ENCODE measurements at regions of chr13 and their contacts with region 1.

Region 1: DNA sequence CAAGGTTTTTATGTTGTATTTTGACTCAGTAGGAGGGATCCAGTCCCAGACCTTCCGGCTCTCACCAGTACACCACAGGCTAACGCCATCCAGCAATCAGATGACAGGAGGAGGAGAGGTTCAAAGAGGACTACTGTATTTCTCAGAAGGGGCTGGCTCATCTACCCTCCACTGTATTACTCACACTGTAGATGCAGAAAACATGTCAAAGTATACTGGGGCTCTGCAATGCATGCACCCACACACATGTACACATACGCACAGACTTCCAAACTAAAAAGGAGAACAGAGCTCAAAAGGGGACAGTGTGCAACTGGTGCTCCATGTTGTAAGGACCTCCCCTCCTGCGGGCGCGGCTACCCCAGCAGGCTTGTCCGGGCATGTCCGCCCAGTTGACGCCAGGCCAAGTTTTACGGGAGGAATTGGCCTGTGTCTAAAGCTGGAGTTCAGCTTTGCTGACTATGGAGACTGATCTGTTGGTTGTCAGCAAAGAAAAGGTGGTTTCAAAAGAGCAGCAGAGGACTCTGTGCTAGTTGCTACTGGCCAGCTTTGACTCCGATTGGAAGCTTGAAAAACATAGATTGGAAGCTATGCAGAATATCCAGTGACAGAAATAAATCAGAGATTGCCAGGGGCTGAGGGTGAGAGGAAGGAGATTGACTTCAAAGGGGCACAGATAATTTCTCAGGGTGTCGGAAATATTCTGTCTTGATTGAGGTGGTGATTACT is 314.2 kb downstream of the DLEU7 start:
- DNase-seq: no peak
- ATAC-seq: peak; percentile 88
- H3K4me3 ChIP-seq: peak overlapping the region in 1 of 2 experiments; percentile 36; a peak in 3 of 4 replicates
- H3K27ac ChIP-seq: peak overlapping the region; percentile 85
- H3K4me1 ChIP-seq: peaks cover 36% of the 10 kb centered on the region
- H3K27me3 ChIP-seq: no peaks in the 10 kb centered on the region
- CTCF ChIP-seq: no peak

Region 2: GRCh38 chr13:50116430-50116973 is 412.8 kb before region 1 on chr13:
- CTCF ChIA-PET with region 1: interaction called, 11 read pairs
- POLR2A ChIA-PET with region 1: no interaction called
- in situ Hi-C with region 1: no loop called
- intact Hi-C with region 1: no loop called
- DNase-seq: no peak
- ATAC-seq: no peak
- H3K4me3 ChIP-seq: no peak overlapping the region
- H3K27ac ChIP-seq: no peak overlapping the region; the same call in 1 of the 2 replicates
- H3K4me1 ChIP-seq: peaks cover 15% of the 10 kb centered on the region
- H3K27me3 ChIP-seq: no peaks in the 10 kb centered on the region
- CTCF ChIP-seq: no peak

Region 3: DNA sequence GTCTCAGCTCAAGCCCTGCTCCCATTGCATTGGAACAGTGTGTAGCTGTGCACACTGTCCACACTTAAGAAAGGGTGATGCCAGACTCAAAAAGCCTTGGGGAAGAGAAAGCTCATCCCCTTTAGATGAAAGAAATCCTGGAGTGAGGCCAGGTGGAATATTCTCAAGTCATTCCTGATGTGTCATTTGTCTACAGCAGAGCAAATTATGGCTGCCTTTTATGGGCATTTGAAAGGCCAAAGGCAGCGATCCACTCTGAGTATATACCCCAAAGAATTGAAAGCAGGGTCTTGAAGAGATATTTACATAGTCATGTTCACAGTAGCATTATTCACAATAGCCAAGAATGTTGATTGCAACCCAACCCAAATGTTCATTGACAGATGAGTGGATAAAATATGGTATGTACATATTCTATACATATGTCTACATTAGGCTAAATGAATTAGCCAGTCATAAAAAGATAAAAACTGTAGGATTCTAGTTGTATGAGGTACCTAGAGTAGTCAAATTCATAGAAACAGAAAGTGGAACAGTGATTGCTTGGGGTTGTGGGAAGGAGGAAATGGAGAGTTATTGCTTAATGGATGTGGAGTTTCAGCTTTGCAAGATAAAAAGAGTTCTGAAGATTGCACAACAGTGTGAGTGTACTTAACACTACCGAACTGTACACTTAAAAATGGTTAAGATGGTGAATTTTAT is 299.2 kb before region 1 on chr13:
- CTCF ChIA-PET with region 1: no interaction called
- POLR2A ChIA-PET with region 1: interaction called, 4 read pairs
- in situ Hi-C with region 1: no loop called
- intact Hi-C with region 1: loop called (anchors 5 kb)
- DNase-seq: no peak
- ATAC-seq: peak; percentile 51; the same call in 1 of the 2 replicates
- H3K4me3 ChIP-seq: no peak overlapping the region
- H3K27ac ChIP-seq: peak overlapping the region; percentile 69
- H3K4me1 ChIP-seq: peaks cover 3% of the 10 kb centered on the region; the same call in 1 of the 2 replicates
- H3K27me3 ChIP-seq: no peaks in the 10 kb centered on the region
- CTCF ChIP-seq: no peak

Region 4: GRCh38 chr13:50951366-50951765 is 422.0 kb after region 1 on chr13:
- CTCF ChIA-PET with region 1: no interaction called
- POLR2A ChIA-PET with region 1: no interaction called
- in situ Hi-C with region 1: no loop called
- intact Hi-C with region 1: no loop called
- DNase-seq: no peak
- ATAC-seq: no peak
- H3K4me3 ChIP-seq: no peak overlapping the region
- H3K27ac ChIP-seq: no peak overlapping the region
- H3K4me1 ChIP-seq: no peaks in the 10 kb centered on the region
- H3K27me3 ChIP-seq: no peaks in the 10 kb centered on the region
- CTCF ChIP-seq: no peak

Region 5: DNA sequence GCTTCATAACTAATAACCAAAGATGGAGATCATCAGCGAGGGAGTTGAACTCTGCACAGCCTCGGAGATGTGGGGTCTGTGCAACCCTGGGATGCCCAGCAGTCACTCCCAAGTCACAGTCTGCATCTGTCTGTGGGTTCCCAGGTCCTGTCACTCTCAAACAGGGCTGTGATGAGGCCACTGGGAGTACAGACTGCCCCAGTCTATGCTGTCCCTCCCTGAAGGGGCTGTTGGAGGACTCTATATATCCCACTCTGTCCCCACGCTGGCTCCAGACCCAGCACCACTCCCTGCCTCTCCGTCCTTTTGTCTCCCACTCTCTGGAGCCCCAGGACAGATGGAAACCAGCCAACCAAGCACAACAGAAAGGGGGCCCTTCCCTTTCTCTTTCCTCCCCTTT is 607.9 kb after region 1 on chr13:
- CTCF ChIA-PET with region 1: no interaction called
- POLR2A ChIA-PET with region 1: no interaction called
- in situ Hi-C with region 1: no loop called
- intact Hi-C with region 1: no loop called
- DNase-seq: no peak
- ATAC-seq: no peak
- H3K4me3 ChIP-seq: no peak overlapping the region
- H3K27ac ChIP-seq: no peak overlapping the region
- H3K4me1 ChIP-seq: no peaks in the 10 kb centered on the region
- H3K27me3 ChIP-seq: no peaks in the 10 kb centered on the region
- CTCF ChIP-seq: no peak

Measured in Panc1 (cell line).